Endothelial cell of umbilical vein (primary cell): ENCODE measurements at regions of chr9 and their contacts with region 1.

Region 1: DNA sequence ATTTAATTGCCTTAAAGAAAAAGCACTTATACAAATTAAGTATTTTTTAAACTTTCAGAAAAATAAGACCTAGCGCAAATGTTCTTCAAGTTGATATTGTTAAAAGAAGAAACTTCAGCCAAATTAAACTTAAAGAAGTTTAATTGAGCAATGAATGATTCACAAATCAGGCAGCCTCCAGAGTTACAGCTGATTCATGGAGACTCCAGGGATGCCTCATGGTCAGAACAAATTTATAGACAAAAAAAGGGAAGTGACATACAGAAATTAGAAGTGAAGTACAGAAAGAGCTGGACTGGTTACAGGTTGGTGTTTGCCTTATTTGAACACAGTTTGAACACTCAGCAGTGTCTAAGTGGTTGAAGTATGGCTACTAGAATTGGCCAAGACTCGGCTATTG is 60.3 kb downstream of the CDKN2A start:
- DNase-seq: no peak
- H3K4me3 ChIP-seq: no peak overlapping the region
- H3K27ac ChIP-seq: no peak overlapping the region
- H3K4me1 ChIP-seq: no peaks in the 10 kb centered on the region
- H3K27me3 ChIP-seq: no peaks in the 10 kb centered on the region
- CTCF ChIP-seq: no peak
- POLR2A ChIP-seq: no peak

Region 2: GRCh38 chr9:21961569-21961968 is 27.7 kb after region 1 on chr9:
- CTCF ChIA-PET with region 1: no interaction called
- POLR2A ChIA-PET with region 1: no interaction called
- dilution Hi-C with region 1: no loop called
- intact Hi-C with region 1: no loop called
- DNase-seq: no peak
- H3K4me3 ChIP-seq: no peak overlapping the region
- H3K27ac ChIP-seq: no peak overlapping the region
- H3K4me1 ChIP-seq: peaks cover 13% of the 10 kb centered on the region
- H3K27me3 ChIP-seq: peaks cover 21 to 51% of the 10 kb centered on the region in 2 experiments
- CTCF ChIP-seq: no peak
- POLR2A ChIP-seq: no peak

Region 3: DNA sequence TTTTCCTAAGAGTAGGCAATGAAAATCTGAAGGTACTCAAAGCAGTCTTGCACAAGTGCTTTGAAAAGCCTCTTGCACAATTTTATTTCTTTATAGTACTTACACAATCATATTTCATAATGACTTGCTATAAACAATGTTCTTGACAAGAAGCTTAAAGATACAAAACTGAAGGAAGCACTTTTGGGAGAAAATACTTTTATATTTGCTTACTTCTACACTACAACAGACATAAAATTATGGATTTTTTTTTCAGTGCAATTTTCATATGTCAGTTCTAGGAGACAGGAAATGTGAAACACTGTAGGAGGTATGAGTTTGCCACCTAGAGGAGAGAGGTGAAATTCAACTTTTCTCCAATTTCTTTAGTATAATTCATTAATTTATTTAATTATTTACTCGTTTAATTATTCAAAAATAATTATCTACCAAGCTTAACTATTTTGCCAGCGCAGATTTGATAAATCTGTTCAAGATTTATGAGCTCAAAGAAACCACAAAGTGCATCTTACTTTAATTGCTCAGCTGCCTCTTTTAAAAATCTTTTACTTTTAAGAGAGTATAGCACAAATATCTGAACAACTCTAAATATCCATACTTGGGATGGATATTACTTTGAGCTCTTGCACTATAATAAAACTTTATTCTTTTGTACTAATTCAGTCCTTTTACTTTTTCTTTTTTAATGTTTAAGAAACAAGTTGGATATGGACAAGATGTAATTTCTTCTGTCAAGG is 104.3 kb after region 1 on chr9:
- CTCF ChIA-PET with region 1: no interaction called
- POLR2A ChIA-PET with region 1: no interaction called
- dilution Hi-C with region 1: no loop called
- intact Hi-C with region 1: loop called (anchors 5 kb)
- DNase-seq: peak; percentile 51
- H3K4me3 ChIP-seq: no peak overlapping the region
- H3K27ac ChIP-seq: no peak overlapping the region
- H3K4me1 ChIP-seq: no peaks in the 10 kb centered on the region
- H3K27me3 ChIP-seq: no peaks in the 10 kb centered on the region
- CTCF ChIP-seq: peak; percentile 22 to 38
- POLR2A ChIP-seq: no peak